ENCODE measurements at regions of chr3 and their contacts with region 1.

Region 1: GRCh38 chr3:38479431-38480092 is 16.6 kb upstream of the EXOG start:
- DNase-seq: no peak
- ATAC-seq: peak; percentile 71
- H3K4me3 Mint-ChIP-seq: no peak overlapping the region
- H3K27ac Mint-ChIP-seq: no peak overlapping the region
- H3K4me1 Mint-ChIP-seq: no peaks in the 10 kb centered on the region
- H3K27me3 Mint-ChIP-seq: no peaks in the 10 kb centered on the region
- CTCF ChIP-seq: peak; percentile 83

Region 2: GRCh38 chr3:37935756-37936666 is 543.6 kb before region 1 on chr3:
- CTCF ChIA-PET with region 1: no interaction called
- POLR2A ChIA-PET with region 1: no interaction called
- intact Hi-C with region 1: no loop called
- DNase-seq: no peak
- ATAC-seq: no peak
- H3K4me3 Mint-ChIP-seq: no peak overlapping the region
- H3K27ac Mint-ChIP-seq: no peak overlapping the region
- H3K4me1 Mint-ChIP-seq: no peaks in the 10 kb centered on the region
- H3K27me3 Mint-ChIP-seq: peaks cover 9% of the 10 kb centered on the region
- CTCF ChIP-seq: no peak

Region 3: DNA sequence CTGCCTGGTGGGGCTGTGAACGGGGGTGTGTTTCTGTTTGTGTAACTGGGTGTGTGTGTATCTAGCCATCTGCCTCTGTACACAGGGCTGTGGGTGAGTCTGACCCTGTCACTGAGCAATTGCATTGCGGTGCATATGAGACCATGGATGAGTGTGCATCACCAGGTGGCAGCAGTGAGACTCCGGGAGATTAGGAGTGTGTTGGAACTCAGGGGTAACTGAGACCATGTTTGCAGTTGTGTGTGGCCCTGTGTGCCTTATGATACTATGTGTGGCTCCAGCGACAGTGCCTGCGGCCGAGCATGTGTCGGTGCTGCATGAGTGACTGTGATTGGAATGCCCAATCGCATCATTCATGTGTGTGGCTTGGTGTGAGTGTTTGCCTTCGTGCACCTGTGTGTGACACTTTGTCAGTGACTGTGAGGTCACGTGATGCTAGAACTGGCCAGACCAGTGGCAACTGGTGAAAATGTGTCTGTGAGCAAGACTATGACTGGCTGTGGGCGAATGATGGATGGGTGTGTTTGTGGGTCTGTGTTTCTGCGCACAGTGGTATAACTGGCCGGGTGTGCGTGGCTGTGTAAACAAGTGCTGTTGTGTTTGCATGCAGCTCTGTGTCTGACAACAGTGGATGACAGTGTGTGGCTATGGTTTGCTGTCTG is 475.0 kb before region 1 on chr3:
- CTCF ChIA-PET with region 1: interaction called, 5 read pairs
- POLR2A ChIA-PET with region 1: no interaction called
- intact Hi-C with region 1: loop called (anchors 1 kb)
- DNase-seq: no peak
- ATAC-seq: peak; percentile 73
- H3K4me3 Mint-ChIP-seq: no peak overlapping the region
- H3K27ac Mint-ChIP-seq: peak overlapping the region; percentile 10
- H3K4me1 Mint-ChIP-seq: peaks cover 4% of the 10 kb centered on the region
- H3K27me3 Mint-ChIP-seq: no peaks in the 10 kb centered on the region
- CTCF ChIP-seq: no peak

Region 4: DNA sequence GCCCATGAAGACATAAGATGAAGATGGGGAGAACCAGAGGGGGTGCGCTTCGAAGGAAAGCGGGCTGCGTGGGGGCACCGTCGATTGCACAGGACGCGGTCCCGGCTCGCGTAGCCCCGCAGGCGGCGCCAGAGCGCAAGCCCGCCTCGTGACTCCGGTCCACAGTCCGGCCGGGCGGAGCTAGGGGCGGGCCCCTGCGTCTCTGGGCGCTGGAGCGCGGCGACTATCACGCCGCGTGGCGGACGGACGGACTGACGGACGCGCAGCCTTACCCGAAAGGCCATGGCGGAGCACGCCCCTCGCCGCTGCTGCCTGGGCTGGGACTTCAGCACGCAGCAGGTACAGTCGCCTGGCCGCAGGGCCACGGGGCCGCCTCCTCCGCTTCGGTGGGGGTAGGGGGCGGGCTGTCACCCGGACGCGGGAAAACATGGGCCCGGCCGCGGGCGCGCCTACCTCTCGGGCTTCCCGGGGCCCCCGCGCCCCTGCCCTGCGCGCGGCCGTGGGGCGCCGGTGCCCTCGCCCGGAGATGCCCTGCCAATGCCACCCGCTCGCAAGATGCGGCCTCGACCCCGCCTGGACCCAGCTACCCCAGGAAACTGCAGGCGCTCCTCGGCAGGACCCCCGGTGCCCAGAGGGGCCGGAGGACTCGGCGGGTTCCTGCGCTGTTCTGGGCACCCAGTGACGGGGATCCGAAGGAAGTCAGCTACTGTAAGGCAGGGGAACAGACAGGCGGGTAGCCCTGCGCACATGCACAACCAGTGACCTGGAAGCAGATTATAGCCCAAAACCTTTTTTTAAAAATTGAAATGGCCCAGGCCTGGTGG is 132.8 kb before region 1 on chr3 and contains the start of gene XYLB:
- CTCF ChIA-PET with region 1: interaction called, 8 read pairs
- POLR2A ChIA-PET with region 1: no interaction called
- intact Hi-C with region 1: loop called (anchors 2 kb)
- DNase-seq: peak; percentile 72
- ATAC-seq: peak; percentile 97
- H3K4me3 Mint-ChIP-seq: peak within 1 kb of the TSS; percentile 81
- H3K27ac Mint-ChIP-seq: no peak within 1 kb of the TSS
- H3K4me1 Mint-ChIP-seq: peaks cover 4% of the 10 kb centered on the region
- H3K27me3 Mint-ChIP-seq: no peaks in the 10 kb centered on the region
- CTCF ChIP-seq: no peak
- total RNA-seq, gene XYLB: 1.3 and 1.8 TPM in 2 replicates

Measured in activated B cell treated with CpG ODN at 0.5 μM for 24 hours (primary cell).